Heart right ventricle (tissue), 16 donors: ENCODE measurements at regions of chr7 and their contacts with region 1.

Region 1: DNA sequence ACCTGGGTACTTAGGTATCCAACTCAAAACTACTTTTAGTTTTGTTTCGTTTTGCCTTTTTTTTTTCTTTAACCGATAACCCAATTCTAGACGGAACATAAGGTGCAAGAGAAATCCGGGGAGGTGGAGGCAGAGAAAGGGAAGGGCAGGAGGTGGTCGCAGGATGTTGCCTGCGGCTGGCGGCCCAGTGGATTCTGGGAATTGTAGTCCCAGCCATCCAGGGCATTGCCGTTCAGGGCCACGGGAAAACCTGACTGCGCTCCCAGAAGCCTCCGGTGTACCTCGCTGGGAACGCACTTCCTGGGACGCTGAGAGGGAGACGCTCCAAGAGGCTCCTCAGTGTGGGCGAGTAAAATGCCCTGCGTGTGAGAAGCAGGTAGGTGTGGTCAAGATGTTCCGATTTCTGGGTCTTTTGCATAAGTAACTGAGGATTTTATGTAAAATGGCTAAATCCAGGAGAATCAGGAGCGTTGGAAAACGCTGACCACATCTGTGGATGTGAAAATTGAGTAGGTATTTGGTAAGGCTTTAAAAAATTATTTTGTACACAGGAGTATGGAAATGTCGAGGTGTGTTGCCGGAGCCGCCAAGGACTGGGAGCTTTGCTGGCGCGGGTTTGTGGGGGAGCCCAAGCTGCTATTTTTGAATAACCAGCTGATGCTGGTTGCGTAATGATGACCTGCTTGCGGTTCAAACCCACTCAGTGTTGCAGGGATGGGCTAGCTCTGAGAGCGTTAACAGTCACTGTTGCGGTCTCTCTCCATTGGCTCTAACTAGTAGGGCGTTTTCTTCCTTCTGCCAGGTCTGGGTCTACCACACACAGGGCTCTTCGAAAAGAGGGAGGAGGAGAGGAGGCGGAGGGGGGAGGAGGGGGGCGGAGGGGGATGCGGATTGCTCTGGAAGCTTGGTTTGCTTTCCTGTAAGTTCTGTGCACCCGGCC is at the start of gene CLDN12:
- DNase-seq: peak; percentile 81 to 89
- ATAC-seq: peak; percentile 94 to 98 (median 96)
- H3K4me3 ChIP-seq: peak within 1 kb of the TSS; percentile 50 to 85 (median 64)
- H3K27ac ChIP-seq: peak within 1 kb of the TSS; percentile 64 to 92 (median 88)
- H3K4me1 ChIP-seq: peaks cover 0 to 44% (median 26%) of the 10 kb centered on the region in 9 donors
- H3K27me3 ChIP-seq: no peaks in the 10 kb centered on the region
- CTCF ChIP-seq: no peak
- total RNA-seq, gene CLDN12: 25.3 to 47.6 (median 38.2) TPM

Region 2: GRCh38 chr7:89283302-89283701 is 1120.1 kb before region 1 on chr7:
- intact Hi-C with region 1: no loop called
- DNase-seq: no peak
- ATAC-seq: peak in 4 of 8 donors; percentile 39 to 71 (median 54)
- H3K4me3 ChIP-seq: no peak overlapping the region
- H3K27ac ChIP-seq: no peak overlapping the region
- H3K4me1 ChIP-seq: no peaks in the 10 kb centered on the region
- H3K27me3 ChIP-seq: no peaks in the 10 kb centered on the region
- CTCF ChIP-seq: no peak

Region 3: DNA sequence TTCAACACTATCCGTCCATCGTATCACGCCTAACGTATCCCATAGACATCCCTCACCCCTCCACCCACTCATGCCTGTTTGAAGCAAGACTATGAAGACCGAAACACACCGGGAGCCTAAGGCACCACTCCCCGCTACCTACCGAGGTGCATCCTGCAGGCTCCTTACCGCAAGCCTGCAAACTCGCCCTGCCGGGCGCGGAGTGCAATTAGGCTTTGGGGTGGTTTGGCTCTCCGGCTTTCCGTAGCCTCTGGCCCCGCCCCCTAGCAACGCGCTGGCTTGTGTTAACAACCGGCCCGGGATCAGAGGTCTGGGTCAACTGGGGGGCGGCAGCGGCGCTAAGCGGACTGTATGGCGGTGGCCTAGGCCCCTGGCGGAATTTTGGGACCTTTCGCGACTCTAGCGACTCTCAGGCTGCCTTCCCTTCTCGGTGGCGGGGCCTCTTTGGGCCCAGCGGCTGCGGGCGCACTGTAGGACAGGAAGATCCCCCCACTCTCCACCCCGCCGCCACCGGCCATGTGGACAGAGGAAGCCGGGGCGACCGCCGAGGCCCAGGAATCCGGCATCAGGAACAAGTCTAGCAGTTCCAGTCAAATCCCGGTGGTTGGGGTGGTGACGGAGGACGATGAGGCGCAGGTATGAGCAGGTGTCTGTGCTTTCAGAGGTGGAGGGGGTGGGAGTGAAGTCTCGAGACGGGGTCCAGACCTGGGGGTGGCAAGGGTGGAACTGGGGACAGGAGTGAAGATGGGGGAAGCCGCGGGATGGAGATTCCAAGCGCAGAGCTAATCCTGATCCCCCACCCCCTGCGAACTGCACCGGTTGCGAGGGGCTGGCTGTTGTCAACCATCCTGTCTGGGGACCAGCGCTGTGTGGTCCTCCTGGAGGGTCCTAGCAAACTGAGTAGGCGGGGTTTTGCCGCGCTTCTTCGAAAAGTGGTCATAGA is 158.3 kb before region 1 on chr7 and contains the start of gene CFAP69:
- intact Hi-C with region 1: loop called in 1 of 10 experiments (anchors 10 kb)
- DNase-seq: peak; percentile 90 to 92
- ATAC-seq: peak; percentile 95 to 98 (median 97)
- H3K4me3 ChIP-seq: peak within 1 kb of the TSS; percentile 65 to 99 (median 92)
- H3K27ac ChIP-seq: peak within 1 kb of the TSS in 5 of 10 donors; percentile 32 to 70 (median 59)
- H3K4me1 ChIP-seq: peaks cover 0 to 22% (median 12%) of the 10 kb centered on the region in 9 donors
- H3K27me3 ChIP-seq: peaks cover 0 to 18% (median 0%) of the 10 kb centered on the region in 7 donors
- CTCF ChIP-seq: peak in 4 of 9 donors; percentile 25 to 41 (median 34)
- total RNA-seq, gene CFAP69: 1.0 to 4.1 (median 2.8) TPM

Region 4: GRCh38 chr7:90346336-90347125 is 56.9 kb before region 1 on chr7 and contains the start of gene GTPBP10:
- intact Hi-C with region 1: loop called in 4 of 10 experiments (anchors 2 to 5 kb)
- DNase-seq: peak; percentile 94
- ATAC-seq: peak; percentile 100
- H3K4me3 ChIP-seq: peak within 1 kb of the TSS; percentile 65 to 89 (median 74)
- H3K27ac ChIP-seq: peak within 1 kb of the TSS; percentile 45 to 96 (median 82)
- H3K4me1 ChIP-seq: peaks cover 0 to 23% (median 13%) of the 10 kb centered on the region in 9 donors
- H3K27me3 ChIP-seq: no peaks in the 10 kb centered on the region
- CTCF ChIP-seq: peak; percentile 50 to 80 (median 64)
- total RNA-seq, gene GTPBP10: 20.2 to 27.6 (median 23.7) TPM